GM12878 (cell line): ENCODE measurements at regions of chr3 and their contacts with region 1.

Region 1: DNA sequence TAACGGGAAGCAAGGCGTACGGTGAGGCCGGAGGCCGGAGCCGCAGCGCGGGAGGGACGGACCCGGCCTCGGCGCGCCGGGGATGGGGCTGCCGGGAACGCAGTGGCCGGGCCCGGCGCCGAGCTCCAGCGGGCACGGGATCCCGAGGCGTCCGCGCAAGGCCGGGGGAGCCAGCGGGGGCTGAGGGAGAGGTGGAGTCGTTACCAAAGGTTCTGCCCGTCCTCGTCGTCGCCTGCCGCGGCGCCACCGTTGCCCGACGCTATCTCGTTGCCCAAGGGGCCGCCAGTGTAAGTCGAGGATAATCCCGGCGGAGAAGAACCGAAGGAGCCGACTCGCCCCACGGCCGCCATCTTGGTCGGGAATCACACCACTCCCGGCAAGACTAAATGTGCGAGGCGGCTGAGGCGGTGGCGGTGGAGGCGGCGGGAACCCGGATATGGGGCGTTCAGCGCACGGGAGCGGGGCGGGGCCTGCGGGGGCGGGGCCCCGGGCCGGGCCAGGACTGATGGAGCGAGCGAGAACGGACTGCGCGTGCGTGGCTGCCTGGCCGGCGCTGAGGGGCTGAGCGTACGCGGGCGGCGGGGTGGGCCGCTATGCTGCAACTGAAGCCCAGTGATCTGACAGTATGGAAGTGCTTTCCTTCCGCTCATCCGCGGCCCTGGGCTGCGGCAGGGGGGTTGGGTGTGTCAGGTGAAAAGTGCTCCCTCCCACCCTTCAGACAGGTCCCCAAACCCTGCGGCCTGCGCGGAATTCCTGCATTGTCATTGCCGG is at the start of gene DYNC1LI1:
- DNase-seq: peak; percentile 65
- ATAC-seq: peak; percentile 96
- H3K4me3 ChIP-seq: peak within 1 kb of the TSS; percentile 92
- H3K27ac ChIP-seq: peak within 1 kb of the TSS; percentile 74
- H3K4me1 ChIP-seq: no peaks in the 10 kb centered on the region
- H3K27me3 ChIP-seq: no peaks in the 10 kb centered on the region
- CTCF ChIP-seq: no peak
- EP300 ChIP-seq: no peak
- POLR2A ChIP-seq: peak; percentile 97
- RAD21 ChIP-seq: no peak
- polyA plus RNA-seq, gene DYNC1LI1: 11.5 to 17.0 TPM

Region 2: DNA sequence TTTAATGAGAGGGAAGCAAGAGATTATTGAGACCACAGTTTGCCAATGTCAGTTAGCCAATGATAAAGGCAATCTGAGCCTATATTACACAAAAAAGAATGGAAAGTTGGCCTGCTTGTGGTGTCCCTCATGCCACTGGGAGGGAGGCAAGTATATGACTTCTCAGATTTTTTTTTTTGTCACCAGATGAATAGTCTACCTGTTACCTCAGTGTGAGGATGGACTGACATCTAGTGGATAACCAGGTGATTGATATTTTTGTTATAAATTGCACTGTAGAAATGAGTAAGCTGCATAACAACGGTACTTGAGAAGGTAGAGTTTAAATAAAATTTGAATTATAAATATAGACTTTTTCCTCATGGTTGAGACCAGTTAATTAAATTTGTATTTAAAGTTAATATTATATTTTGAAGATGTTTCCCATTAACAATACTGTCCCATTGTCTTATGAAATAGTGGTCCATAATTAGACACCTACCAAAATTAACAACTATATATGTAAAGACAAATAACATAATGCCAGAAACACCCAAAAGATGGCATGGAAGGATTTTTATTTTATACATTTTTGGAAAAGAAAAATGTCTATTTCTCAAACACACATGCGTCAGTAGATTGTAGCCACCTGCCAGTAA is 1438.4 kb before region 1 on chr3:
- CTCF ChIA-PET with region 1: no interaction called
- POLR2A ChIA-PET with region 1: no interaction called
- RAD21 ChIA-PET with region 1: no interaction called
- SMC1A ChIA-PET with region 1: no interaction called
- in situ Hi-C with region 1: no loop called
- intact Hi-C with region 1: no loop called
- DNase-seq: peak; percentile 21
- ATAC-seq: peak; percentile 78
- H3K4me3 ChIP-seq: no peak overlapping the region
- H3K27ac ChIP-seq: no peak overlapping the region
- H3K4me1 ChIP-seq: no peaks in the 10 kb centered on the region
- H3K27me3 ChIP-seq: no peaks in the 10 kb centered on the region
- CTCF ChIP-seq: peak; percentile 28 to 50 (median 39); a peak in 4 of 6 replicates
- EP300 ChIP-seq: no peak
- POLR2A ChIP-seq: no peak
- RAD21 ChIP-seq: peak; percentile 86

Region 3: GRCh38 chr3:32557643-32558352 is 12.8 kb before region 1 on chr3:
- CTCF ChIA-PET with region 1: interaction called, 3 read pairs
- POLR2A ChIA-PET with region 1: interaction called, 7 read pairs
- RAD21 ChIA-PET with region 1: interaction called, 3 read pairs
- SMC1A ChIA-PET with region 1: interaction called, 19 read pairs
- in situ Hi-C with region 1: no loop called
- intact Hi-C with region 1: no loop called
- DNase-seq: no peak
- ATAC-seq: no peak
- H3K4me3 ChIP-seq: no peak overlapping the region
- H3K27ac ChIP-seq: no peak overlapping the region
- H3K4me1 ChIP-seq: peaks cover 30% of the 10 kb centered on the region
- H3K27me3 ChIP-seq: no peaks in the 10 kb centered on the region
- CTCF ChIP-seq: no peak
- EP300 ChIP-seq: no peak
- POLR2A ChIP-seq: no peak
- RAD21 ChIP-seq: no peak